Testis (tissue), 5 donors: ENCODE measurements at regions of chr6 and their contacts with region 1.

Region 1: GRCh38 chr6:88339761-88340160 is 173.6 kb upstream of the CNR1 start:
- DNase-seq: no peak
- H3K4me3 ChIP-seq: no peak overlapping the region
- H3K27ac ChIP-seq: no peak overlapping the region
- H3K4me1 ChIP-seq: no peaks in the 10 kb centered on the region
- H3K27me3 ChIP-seq: no peaks in the 10 kb centered on the region
- CTCF ChIP-seq: no peak
- POLR2A ChIP-seq: no peak

Region 2: GRCh38 chr6:88584581-88585275 is 245.0 kb after region 1 on chr6:
- intact Hi-C with region 1: loop called (anchors 5 kb)
- DNase-seq: no peak
- H3K4me3 ChIP-seq: no peak overlapping the region
- H3K27ac ChIP-seq: no peak overlapping the region
- H3K4me1 ChIP-seq: peaks cover 14% of the 10 kb centered on the region
- H3K27me3 ChIP-seq: no peaks in the 10 kb centered on the region
- CTCF ChIP-seq: no peak
- POLR2A ChIP-seq: no peak